Left ventricle myocardium inferior (tissue), 1 donor: ENCODE measurements at regions of chr18 and their contacts with region 1.

Region 1: GRCh38 chr18:38033282-38033681 is 467.7 kb upstream of the CELF4 start:
- DNase-seq: no peak
- H3K4me3 ChIP-seq: no peak overlapping the region
- H3K27ac ChIP-seq: no peak overlapping the region
- H3K4me1 ChIP-seq: no peaks in the 10 kb centered on the region
- H3K27me3 ChIP-seq: peaks cover 8% of the 10 kb centered on the region
- CTCF ChIP-seq: no peak

Region 2: GRCh38 chr18:37962316-37962966 is 70.8 kb before region 1 on chr18:
- intact Hi-C with region 1: loop called (anchors 10 kb)
- DNase-seq: no peak
- H3K4me3 ChIP-seq: no peak overlapping the region
- H3K27ac ChIP-seq: no peak overlapping the region
- H3K4me1 ChIP-seq: no peaks in the 10 kb centered on the region
- H3K27me3 ChIP-seq: no peaks in the 10 kb centered on the region
- CTCF ChIP-seq: no peak

Region 3: GRCh38 chr18:38087538-38087937 is 54.3 kb after region 1 on chr18:
- intact Hi-C with region 1: loop called (anchors 10 kb)
- DNase-seq: no peak
- H3K4me3 ChIP-seq: no peak overlapping the region
- H3K27ac ChIP-seq: no peak overlapping the region
- H3K4me1 ChIP-seq: no peaks in the 10 kb centered on the region
- H3K27me3 ChIP-seq: no peaks in the 10 kb centered on the region
- CTCF ChIP-seq: no peak